CD8-positive, alpha-beta T cell (primary cell): ENCODE measurements at regions of chr21 and their contacts with region 1.

Region 1: DNA sequence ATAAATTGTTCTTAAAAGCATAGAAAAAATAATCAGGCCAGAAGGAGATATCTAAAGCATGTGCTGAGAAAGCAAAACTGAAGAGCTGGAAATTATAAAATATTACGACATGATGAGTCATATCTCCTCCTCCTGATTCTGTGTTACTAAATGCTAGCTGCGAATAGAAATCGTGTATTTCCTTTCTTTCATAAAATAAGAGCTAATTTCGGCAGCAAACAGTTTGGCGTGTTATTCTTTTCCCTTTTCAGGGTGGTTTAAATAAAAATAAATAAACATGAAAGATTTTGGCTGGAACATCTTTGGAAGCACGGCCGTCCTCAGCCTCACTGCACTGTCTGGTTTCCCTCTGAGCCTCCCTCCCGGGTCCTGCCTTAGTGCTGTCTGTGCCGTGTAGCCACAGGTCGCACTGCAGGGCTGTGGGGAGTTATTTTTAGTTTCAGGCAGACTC is 56.0 kb downstream of the ADARB1 start:
- DNase-seq: no peak
- ATAC-seq: no peak
- H3K4me3 ChIP-seq: no peak overlapping the region
- H3K4me3 Mint-ChIP-seq: no peak overlapping the region
- H3K27ac ChIP-seq: no peak overlapping the region
- H3K27ac Mint-ChIP-seq: no peak overlapping the region
- H3K4me1 ChIP-seq: peaks cover 5% of the 10 kb centered on the region
- H3K4me1 Mint-ChIP-seq: peaks cover 21% of the 10 kb centered on the region
- H3K27me3 ChIP-seq: no peaks in the 10 kb centered on the region
- H3K27me3 Mint-ChIP-seq: no peaks in the 10 kb centered on the region
- CTCF ChIP-seq: no peak

Region 2: DNA sequence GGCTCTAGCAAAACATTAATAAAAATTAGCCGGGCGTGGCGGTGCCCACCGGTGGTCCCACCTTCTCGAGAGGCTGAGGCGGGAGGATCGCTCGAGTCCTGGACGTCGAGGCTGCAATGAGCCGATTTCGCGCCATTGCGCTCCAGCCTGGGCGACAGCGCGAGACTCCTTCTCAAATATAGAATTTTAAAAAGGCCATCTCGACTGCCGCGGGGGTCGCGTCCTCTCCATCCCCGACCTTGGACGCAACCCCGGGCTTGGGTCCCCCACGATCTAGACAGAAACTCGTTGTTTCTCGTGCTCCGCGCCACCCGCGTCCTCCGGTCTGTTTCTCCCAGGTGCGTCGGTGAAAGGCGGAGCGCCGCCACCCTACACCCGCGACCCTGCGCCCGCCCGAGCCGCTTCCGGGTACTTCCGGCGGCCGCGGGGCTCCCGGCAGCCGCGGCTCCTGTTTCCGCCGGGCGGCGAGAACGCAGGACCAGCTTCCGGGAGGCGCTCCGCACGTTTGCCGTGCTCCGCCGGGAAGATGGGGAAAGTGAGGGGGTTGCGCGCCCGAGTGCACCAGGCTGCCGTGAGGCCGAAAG is 190.7 kb before region 1 on chr21 and contains the start of gene SLX9:
- CTCF ChIA-PET with region 1: interaction called, 340 read pairs
- POLR2A ChIA-PET with region 1: no interaction called
- intact Hi-C with region 1: no loop called
- DNase-seq: peak; percentile 57 to 90 (median 78)
- ATAC-seq: peak; percentile 90
- H3K4me3 ChIP-seq: peak within 1 kb of the TSS; percentile 72 to 79
- H3K4me3 Mint-ChIP-seq: peak within 1 kb of the TSS; percentile 86
- H3K27ac ChIP-seq: peak within 1 kb of the TSS; percentile 40 to 56
- H3K27ac Mint-ChIP-seq: peak within 1 kb of the TSS; percentile 87
- H3K4me1 ChIP-seq: peaks cover 36% of the 10 kb centered on the region
- H3K4me1 Mint-ChIP-seq: peaks cover 41% of the 10 kb centered on the region
- H3K27me3 ChIP-seq: no peaks in the 10 kb centered on the region
- H3K27me3 Mint-ChIP-seq: no peaks in the 10 kb centered on the region
- CTCF ChIP-seq: no peak
- total RNA-seq, gene SLX9: 8.2 to 10.0 TPM

Region 3: GRCh38 chr21:44962403-44962966 is 167.9 kb before region 1 on chr21:
- CTCF ChIA-PET with region 1: interaction called, 340 read pairs
- POLR2A ChIA-PET with region 1: no interaction called
- intact Hi-C with region 1: loop called in 1 of 2 experiments (anchors 5 kb)
- DNase-seq: no peak
- ATAC-seq: no peak
- H3K4me3 ChIP-seq: no peak overlapping the region
- H3K4me3 Mint-ChIP-seq: no peak overlapping the region
- H3K27ac ChIP-seq: no peak overlapping the region
- H3K27ac Mint-ChIP-seq: no peak overlapping the region
- H3K4me1 ChIP-seq: peaks cover 30% of the 10 kb centered on the region
- H3K4me1 Mint-ChIP-seq: peaks cover 30% of the 10 kb centered on the region
- H3K27me3 ChIP-seq: no peaks in the 10 kb centered on the region
- H3K27me3 Mint-ChIP-seq: no peaks in the 10 kb centered on the region
- CTCF ChIP-seq: no peak

Region 4: DNA sequence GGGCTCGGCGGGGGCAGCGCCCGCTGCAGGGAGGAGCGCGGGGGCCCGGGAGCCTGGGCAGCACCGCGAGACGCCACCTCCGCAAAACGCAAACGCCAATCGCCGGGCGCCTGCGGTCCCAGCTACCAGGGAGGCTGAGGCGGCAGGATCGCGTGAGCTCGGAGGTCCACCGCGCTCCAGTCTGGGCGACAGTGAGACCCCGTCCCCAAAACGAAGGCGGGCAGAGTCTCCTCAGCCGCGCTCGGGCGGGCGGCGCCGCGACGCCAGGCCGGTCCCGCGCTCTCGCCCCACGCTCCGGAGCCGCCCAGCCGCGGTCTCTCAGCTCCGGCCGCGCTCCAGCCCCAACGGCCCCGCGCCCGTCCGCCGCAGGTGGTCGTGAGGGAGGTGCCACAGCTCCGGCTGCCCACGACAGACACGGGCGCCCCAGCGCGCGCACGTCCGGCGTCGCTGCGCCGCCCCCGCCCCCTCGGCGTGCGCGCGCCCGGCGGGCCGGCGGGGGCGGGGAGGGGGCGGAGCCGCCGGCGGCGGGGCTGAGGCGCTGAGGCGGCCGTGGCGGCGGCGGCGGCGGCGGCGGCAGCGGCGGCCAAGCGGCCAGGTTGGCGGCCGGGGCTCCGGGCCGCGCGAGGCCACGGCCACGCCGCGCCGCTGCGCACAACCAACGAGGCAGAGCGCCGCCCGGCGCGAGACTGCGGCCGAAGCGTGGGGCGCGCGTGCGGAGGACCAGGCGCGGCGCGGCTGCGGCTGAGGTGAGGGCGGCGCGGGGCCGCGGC is 56.1 kb before region 1 on chr21 and contains the start of gene ADARB1:
- CTCF ChIA-PET with region 1: interaction called, 27 read pairs
- POLR2A ChIA-PET with region 1: interaction called, 3 read pairs
- intact Hi-C with region 1: loop called in 1 of 2 experiments (anchors 5 kb)
- DNase-seq: peak; percentile 24 to 87 (median 63)
- ATAC-seq: peak; percentile 55
- H3K4me3 ChIP-seq: peak within 1 kb of the TSS; percentile 58 to 69
- H3K4me3 Mint-ChIP-seq: peak within 1 kb of the TSS; percentile 95
- H3K27ac ChIP-seq: peak within 1 kb of the TSS; percentile 36 to 68
- H3K27ac Mint-ChIP-seq: peak within 1 kb of the TSS; percentile 92
- H3K4me1 ChIP-seq: peaks cover 38% of the 10 kb centered on the region
- H3K4me1 Mint-ChIP-seq: peaks cover 41% of the 10 kb centered on the region
- H3K27me3 ChIP-seq: no peaks in the 10 kb centered on the region
- H3K27me3 Mint-ChIP-seq: no peaks in the 10 kb centered on the region
- CTCF ChIP-seq: no peak
- total RNA-seq, gene ADARB1: 21.1 to 22.6 TPM

Region 5: GRCh38 chr21:45098867-45099266 is 31.5 kb before region 1 on chr21:
- CTCF ChIA-PET with region 1: interaction called, 26 read pairs
- POLR2A ChIA-PET with region 1: no interaction called
- intact Hi-C with region 1: no loop called
- DNase-seq: no peak
- ATAC-seq: no peak
- H3K4me3 ChIP-seq: no peak overlapping the region
- H3K4me3 Mint-ChIP-seq: no peak overlapping the region
- H3K27ac ChIP-seq: no peak overlapping the region
- H3K27ac Mint-ChIP-seq: no peak overlapping the region
- H3K4me1 ChIP-seq: peaks cover 1% of the 10 kb centered on the region
- H3K4me1 Mint-ChIP-seq: peaks cover 52% of the 10 kb centered on the region
- H3K27me3 ChIP-seq: no peaks in the 10 kb centered on the region
- H3K27me3 Mint-ChIP-seq: no peaks in the 10 kb centered on the region
- CTCF ChIP-seq: no peak

Region 6: GRCh38 chr21:45109831-45110492 is 20.4 kb before region 1 on chr21:
- CTCF ChIA-PET with region 1: interaction called, 16 read pairs
- POLR2A ChIA-PET with region 1: interaction called, 3 read pairs
- intact Hi-C with region 1: no loop called
- DNase-seq: peak in 5 of 9 experiments; percentile 33 to 73 (median 52)
- ATAC-seq: peak; percentile 76
- H3K4me3 ChIP-seq: peak overlapping the region; percentile 43 to 51
- H3K4me3 Mint-ChIP-seq: peak overlapping the region; percentile 81
- H3K27ac ChIP-seq: peak overlapping the region; percentile 14 to 59
- H3K27ac Mint-ChIP-seq: peak overlapping the region; percentile 76
- H3K4me1 ChIP-seq: peaks cover 35% of the 10 kb centered on the region
- H3K4me1 Mint-ChIP-seq: peaks cover 62% of the 10 kb centered on the region
- H3K27me3 ChIP-seq: no peaks in the 10 kb centered on the region
- H3K27me3 Mint-ChIP-seq: no peaks in the 10 kb centered on the region
- CTCF ChIP-seq: no peak